Activated CD4-positive, alpha-beta memory T cell treated with anti-CD3 and anti-CD28 coated beads for 36 hours (primary cell): ENCODE measurements at regions of chr12 and their contacts with region 1.

Region 1: DNA sequence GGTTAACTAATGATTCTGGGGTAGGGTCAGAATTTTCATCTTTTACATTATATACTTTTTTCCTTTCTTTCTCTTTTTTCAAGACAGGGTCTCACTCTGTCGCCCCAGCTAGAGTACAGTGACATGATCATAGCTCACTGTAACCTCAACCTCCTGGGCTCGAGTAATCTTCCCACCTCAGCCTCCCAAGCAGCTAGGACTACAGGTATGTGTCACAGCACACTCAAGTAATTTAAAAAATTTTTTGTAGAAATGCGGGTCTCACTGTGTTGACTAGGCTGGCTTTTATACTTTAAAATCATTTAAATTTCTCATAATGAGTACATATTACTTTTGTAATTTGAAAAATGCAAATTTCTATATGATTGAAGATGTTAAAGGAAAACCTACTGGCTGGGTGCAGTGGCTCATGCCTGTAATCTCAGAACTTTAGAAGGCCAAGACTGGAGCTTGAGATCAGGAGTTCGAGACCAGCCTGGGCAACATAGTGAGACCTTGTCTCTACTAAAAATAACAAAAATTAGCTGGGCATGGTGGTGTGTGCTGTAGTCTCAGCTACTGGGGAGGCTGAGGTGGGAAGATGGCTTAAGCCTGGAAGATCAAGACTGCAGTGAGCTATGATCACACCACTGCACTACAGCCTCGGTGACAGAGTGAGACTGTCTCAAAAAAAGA is 25.7 kb downstream of the R3HDM2 start:
- DNase-seq: peak; percentile 61
- H3K4me3 Mint-ChIP-seq: no peak overlapping the region
- H3K27ac Mint-ChIP-seq: peak overlapping the region; percentile 69
- H3K4me1 Mint-ChIP-seq: peaks cover 12% of the 10 kb centered on the region
- H3K27me3 Mint-ChIP-seq: no peaks in the 10 kb centered on the region

Region 2: GRCh38 chr12:57430931-57431720 is 26.0 kb after region 1 on chr12 and contains the start of gene R3HDM2:
- CTCF ChIA-PET with region 1: no interaction called
- POLR2A ChIA-PET with region 1: interaction called, 4 read pairs
- intact Hi-C with region 1: loop called (anchors 2 kb)
- DNase-seq: peak; percentile 97
- H3K4me3 Mint-ChIP-seq: peak within 1 kb of the TSS; percentile 97
- H3K27ac Mint-ChIP-seq: peak within 1 kb of the TSS; percentile 99
- H3K4me1 Mint-ChIP-seq: peaks cover 37% of the 10 kb centered on the region
- H3K27me3 Mint-ChIP-seq: no peaks in the 10 kb centered on the region
- total RNA-seq, gene R3HDM2: 42.2 to 51.4 TPM

Region 3: DNA sequence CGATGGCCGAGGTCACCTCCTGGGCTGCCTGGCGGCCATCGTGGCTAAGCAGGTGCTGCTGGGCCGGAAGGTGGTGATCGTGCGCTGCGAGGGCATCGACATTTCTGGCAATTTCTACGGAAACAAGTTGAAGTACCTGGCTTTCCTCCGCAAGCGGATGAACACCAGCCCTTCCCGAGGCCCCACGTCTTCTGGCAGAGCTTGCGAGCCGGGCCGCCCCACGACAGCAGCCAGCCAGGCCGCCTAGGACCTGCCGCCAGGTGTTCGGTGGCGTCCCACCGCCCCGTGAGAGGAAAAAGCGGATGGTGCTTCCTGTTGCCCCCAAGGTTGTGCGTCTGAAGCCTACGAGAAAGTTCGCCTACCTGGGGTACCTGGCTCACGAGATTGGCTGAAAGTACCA is 269.6 kb after region 1 on chr12:
- CTCF ChIA-PET with region 1: no interaction called
- POLR2A ChIA-PET with region 1: no interaction called
- intact Hi-C with region 1: no loop called
- DNase-seq: no peak
- H3K4me3 Mint-ChIP-seq: no peak overlapping the region
- H3K27ac Mint-ChIP-seq: no peak overlapping the region
- H3K4me1 Mint-ChIP-seq: no peaks in the 10 kb centered on the region
- H3K27me3 Mint-ChIP-seq: peaks cover 1% of the 10 kb centered on the region